Thyroid gland (tissue), 4 donors: ENCODE measurements at regions of chr9 and their contacts with region 1.

Region 1: DNA sequence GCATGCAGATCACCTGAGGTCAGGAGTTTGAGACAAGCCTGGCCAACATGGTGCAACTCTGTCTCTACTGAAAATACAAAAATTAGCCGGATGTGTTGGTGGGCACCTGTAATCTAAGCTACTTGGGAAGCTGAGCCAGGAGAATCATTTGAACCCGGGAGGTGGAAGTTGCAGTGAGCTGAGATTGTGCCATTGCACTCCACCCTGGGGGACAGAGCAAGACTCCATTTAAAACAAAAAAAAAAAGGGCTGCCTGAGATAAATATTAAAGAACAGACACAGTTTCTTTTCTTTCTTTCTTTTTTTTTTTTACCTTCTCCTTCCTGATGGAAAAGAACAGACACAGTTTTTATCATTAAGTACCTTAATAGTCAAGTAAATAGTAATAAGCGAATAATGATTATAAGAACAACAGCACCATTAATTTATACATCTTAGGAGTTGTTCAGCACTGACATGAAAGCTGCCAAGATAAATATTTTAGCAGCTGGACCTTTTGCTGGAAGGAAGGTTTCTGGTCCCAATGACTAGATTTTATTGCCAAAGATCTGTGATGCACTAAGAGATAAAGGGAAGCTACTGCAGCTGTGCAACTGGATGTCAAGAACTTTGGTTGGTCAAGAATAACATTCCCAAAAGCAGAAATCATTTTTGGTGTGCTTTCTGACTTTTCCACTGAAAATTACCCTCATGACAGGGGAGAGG is 7.0 kb downstream of the CENPP start:
- DNase-seq: no peak
- H3K4me3 ChIP-seq: no peak overlapping the region
- H3K27ac ChIP-seq: no peak overlapping the region
- H3K4me1 ChIP-seq: no peaks in the 10 kb centered on the region
- H3K27me3 ChIP-seq: no peaks in the 10 kb centered on the region
- CTCF ChIP-seq: no peak
- POLR2A ChIP-seq: no peak

Region 2: DNA sequence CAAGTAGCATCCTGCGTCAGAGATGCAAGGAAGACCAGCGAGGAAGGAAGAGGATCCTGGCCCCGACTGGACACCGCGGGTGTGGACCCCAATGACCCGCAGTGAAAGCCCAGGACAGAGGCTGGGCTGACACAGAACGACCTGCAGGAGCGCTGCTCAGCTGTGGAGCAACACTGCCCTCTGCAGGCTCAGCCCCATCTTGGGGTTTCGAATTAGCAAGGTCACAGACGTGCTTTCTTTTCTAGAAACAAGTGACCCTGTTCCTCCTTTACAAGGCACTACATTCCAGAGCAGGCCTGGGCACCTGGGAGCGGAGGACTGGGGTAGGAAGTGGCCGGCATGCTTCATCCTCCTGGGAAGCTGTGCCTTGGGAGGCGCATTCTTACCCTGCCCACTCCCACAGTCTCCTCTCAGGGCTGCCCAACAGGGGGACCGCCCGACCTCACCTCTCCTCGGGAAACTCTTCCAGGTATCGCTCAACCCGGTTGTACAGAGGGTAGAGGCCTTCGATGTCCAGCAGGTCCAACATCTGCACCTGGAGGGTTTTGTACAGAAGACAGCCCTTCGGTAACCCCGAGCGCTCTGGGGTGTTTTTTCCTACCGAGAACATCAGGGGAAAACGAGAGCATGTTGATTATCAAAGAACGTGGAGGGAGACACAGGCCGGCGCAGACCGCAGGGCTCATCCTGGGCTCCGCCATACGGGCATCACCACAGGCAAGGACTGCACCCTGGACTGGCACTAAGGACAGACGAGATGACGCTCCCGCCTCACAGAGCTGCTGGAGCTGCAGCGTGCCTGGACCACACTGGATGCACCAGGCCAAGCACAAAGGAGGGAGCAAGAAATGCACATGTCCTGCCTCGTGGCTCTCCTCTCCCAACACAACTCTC is 302.2 kb after region 1 on chr9:
- intact Hi-C with region 1: loop called (anchors 10 kb)
- DNase-seq: peak; percentile 53 to 66
- H3K4me3 ChIP-seq: no peak overlapping the region
- H3K27ac ChIP-seq: no peak overlapping the region
- H3K4me1 ChIP-seq: no peaks in the 10 kb centered on the region
- H3K27me3 ChIP-seq: no peaks in the 10 kb centered on the region
- CTCF ChIP-seq: peak; percentile 53 to 87 (median 75)
- POLR2A ChIP-seq: no peak